ENCODE measurements at regions of chr9 and their contacts with region 1.

Region 1: DNA sequence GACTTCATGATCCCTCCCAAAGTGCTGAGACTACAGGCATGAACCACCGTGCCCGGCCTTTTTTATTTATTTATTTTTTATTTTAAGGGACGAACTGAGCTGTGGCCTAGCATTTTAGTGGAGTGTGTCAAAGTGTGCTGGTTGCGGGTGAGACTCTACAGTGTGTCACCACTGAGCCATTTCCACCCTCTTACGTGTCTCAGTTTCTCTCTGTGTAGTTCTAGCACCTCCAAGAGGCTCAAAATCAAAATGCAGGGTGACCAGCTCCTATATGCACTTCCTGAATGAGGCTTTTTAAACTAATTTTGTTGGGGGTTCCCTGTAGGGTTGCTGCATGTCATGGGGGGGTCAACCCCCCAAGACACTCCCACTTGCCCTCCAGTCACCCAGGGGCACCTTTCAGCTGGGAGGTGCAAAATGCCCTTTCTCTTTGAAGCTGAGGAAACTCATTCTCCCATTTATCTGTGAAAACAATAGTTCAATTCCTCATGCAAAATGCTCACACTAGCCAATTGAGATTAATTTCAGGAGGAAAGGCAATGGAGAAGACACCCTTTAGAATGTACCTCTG is 69.3 kb downstream of the COL15A1 start:
- DNase-seq: peak; percentile 32
- ATAC-seq: peak; percentile 90
- H3K4me3 Mint-ChIP-seq: no peak overlapping the region
- H3K27ac Mint-ChIP-seq: peak overlapping the region; percentile 86
- H3K4me1 Mint-ChIP-seq: peaks cover 20% of the 10 kb centered on the region
- H3K27me3 Mint-ChIP-seq: no peaks in the 10 kb centered on the region

Region 2: DNA sequence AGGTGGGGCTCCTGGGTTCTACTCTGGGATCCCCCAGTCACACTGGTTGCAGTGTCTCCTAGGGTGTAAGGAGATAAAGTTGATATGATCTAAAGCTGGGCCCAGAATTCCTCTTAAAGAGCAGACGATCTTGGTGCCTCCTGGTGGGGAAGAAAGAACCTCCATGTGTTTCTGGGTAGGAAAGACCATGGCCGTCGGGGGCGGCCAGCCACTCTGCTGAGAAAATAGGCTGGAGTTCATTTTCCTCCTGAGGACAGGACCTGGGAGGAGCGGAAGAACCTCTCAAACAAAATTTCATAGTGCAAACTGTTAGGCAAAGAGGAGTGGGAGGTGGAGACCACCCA is 593.8 kb before region 1 on chr9:
- CTCF ChIA-PET with region 1: no interaction called
- POLR2A ChIA-PET with region 1: no interaction called
- intact Hi-C with region 1: no loop called
- DNase-seq: no peak
- ATAC-seq: no peak
- H3K4me3 Mint-ChIP-seq: no peak overlapping the region
- H3K27ac Mint-ChIP-seq: no peak overlapping the region
- H3K4me1 Mint-ChIP-seq: no peaks in the 10 kb centered on the region
- H3K27me3 Mint-ChIP-seq: peaks cover 7% of the 10 kb centered on the region

Region 3: GRCh38 chr9:98974994-98975712 is 37.9 kb before region 1 on chr9:
- CTCF ChIA-PET with region 1: interaction called, 16 read pairs
- POLR2A ChIA-PET with region 1: no interaction called
- intact Hi-C with region 1: loop called in 1 of 2 experiments (anchors 1 kb)
- DNase-seq: peak; percentile 89
- ATAC-seq: peak; percentile 99
- H3K4me3 Mint-ChIP-seq: no peak overlapping the region
- H3K27ac Mint-ChIP-seq: no peak overlapping the region
- H3K4me1 Mint-ChIP-seq: peaks cover 5% of the 10 kb centered on the region
- H3K27me3 Mint-ChIP-seq: peaks cover 15% of the 10 kb centered on the region